Gastrocnemius medialis (tissue), 4 donors: ENCODE measurements at regions of chr1 and their contacts with region 1.

Region 1: GRCh38 chr1:165501970-165502348 is 41.8 kb upstream of the LRRC52 start:
- DNase-seq: peak; percentile 19 to 33
- ATAC-seq: peak; percentile 63 to 65
- H3K4me3 ChIP-seq: no peak overlapping the region
- H3K27ac ChIP-seq: peak overlapping the region; percentile 81 to 89 (median 84)
- H3K4me1 ChIP-seq: peaks cover 19 to 20% of the 10 kb centered on the region in 2 donors
- H3K27me3 ChIP-seq: no peaks in the 10 kb centered on the region
- CTCF ChIP-seq: no peak
- POLR2A ChIP-seq: no peak

Region 2: DNA sequence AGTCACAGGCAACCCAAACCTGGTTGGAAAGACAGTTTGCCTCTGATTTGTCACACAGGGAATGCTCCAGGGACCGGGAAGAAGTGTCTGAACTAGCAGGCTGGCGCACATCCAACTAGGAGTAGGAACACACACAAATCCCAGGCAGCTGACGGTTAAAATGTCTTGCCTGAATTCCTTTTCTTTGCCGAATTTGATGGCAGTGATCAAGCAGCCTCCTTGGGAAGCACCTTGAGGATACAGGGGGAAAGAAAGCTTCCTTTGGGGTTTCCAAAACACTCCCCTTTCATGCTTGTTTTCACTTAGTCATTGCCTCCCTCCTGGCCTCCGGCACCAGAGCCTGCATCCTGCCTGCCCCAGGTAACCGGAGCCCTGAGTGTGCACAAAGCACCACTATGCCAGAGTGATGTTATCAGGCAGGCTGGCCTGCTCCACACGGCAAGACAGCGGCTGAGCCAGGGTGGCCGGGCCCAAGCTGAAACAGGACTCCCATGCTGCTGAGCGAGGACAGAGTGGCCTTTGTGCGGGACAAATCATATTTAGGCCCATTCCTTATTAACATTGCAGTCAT is 339.2 kb before region 1 on chr1:
- in situ Hi-C with region 1: no loop called
- intact Hi-C with region 1: no loop called
- DNase-seq: peak in 1 of 2 donors; percentile 41
- ATAC-seq: peak in 1 of 2 donors; percentile 61
- H3K4me3 ChIP-seq: no peak overlapping the region
- H3K27ac ChIP-seq: no peak overlapping the region
- H3K4me1 ChIP-seq: peaks cover 0 to 10% of the 10 kb centered on the region in 2 donors
- H3K27me3 ChIP-seq: peaks cover 0 to 2% (median 0%) of the 10 kb centered on the region in 3 donors
- CTCF ChIP-seq: no peak
- POLR2A ChIP-seq: no peak

Region 3: GRCh38 chr1:165392634-165393571 is 109.1 kb before region 1 on chr1:
- in situ Hi-C with region 1: no loop called
- intact Hi-C with region 1: no loop called
- DNase-seq: peak; percentile 68 to 77
- ATAC-seq: peak; percentile 79 to 86
- H3K4me3 ChIP-seq: peak overlapping the region in 2 of 4 donors; percentile 8 to 17
- H3K27ac ChIP-seq: no peak overlapping the region
- H3K4me1 ChIP-seq: peaks cover 6 to 9% of the 10 kb centered on the region in 2 donors
- H3K27me3 ChIP-seq: no peaks in the 10 kb centered on the region
- CTCF ChIP-seq: peak; percentile 87 to 97 (median 91)
- POLR2A ChIP-seq: no peak

Region 4: DNA sequence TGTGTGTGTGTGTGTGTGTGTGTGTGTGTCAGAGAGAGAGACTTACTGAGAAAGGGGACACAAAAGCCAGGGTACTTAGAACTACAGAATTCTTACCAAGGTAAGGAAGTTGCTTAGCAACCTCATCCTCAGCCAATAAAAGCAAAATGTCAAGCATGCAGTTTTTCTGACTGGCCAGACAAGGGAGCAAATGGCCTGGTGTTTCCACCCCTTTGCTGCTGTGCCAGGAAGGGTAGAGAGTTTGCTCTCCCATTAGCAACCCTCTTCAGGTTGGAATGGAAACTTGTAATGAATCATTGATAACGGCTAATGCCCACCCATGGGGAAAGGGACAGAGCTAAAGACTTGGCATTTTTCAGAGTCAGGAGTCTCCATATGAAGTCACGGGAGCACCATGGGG is 67.7 kb before region 1 on chr1:
- in situ Hi-C with region 1: no loop called
- intact Hi-C with region 1: no loop called
- DNase-seq: no peak
- ATAC-seq: no peak
- H3K4me3 ChIP-seq: no peak overlapping the region
- H3K27ac ChIP-seq: no peak overlapping the region
- H3K4me1 ChIP-seq: peaks cover 10 to 12% of the 10 kb centered on the region in 2 donors
- H3K27me3 ChIP-seq: no peaks in the 10 kb centered on the region
- CTCF ChIP-seq: no peak
- POLR2A ChIP-seq: no peak

Region 5: GRCh38 chr1:165531021-165531420 is 29.1 kb after region 1 on chr1:
- in situ Hi-C with region 1: loop called in 1 of 4 experiments (anchors 5 kb)
- intact Hi-C with region 1: loop called (anchors 2 kb)
- DNase-seq: peak; percentile 51 to 62
- ATAC-seq: peak; percentile 97
- H3K4me3 ChIP-seq: no peak overlapping the region
- H3K27ac ChIP-seq: peak overlapping the region; percentile 36 to 77 (median 60)
- H3K4me1 ChIP-seq: peaks cover 39 to 45% of the 10 kb centered on the region in 2 donors
- H3K27me3 ChIP-seq: no peaks in the 10 kb centered on the region
- CTCF ChIP-seq: no peak
- POLR2A ChIP-seq: no peak